AG04450 (cell line): ENCODE measurements at regions of chr9 and their contacts with region 1.

Region 1: GRCh38 chr9:120950421-120951388 is 24.1 kb upstream of the TRAF1 start:
- DNase-seq: no peak
- H3K4me3 ChIP-seq: no peak overlapping the region
- H3K27ac ChIP-seq: no peak overlapping the region
- H3K27me3 ChIP-seq: peaks cover 3% of the 10 kb centered on the region
- CTCF ChIP-seq: no peak

Region 2: GRCh38 chr9:120610975-120611689 is 339.6 kb before region 1 on chr9:
- CTCF ChIA-PET with region 1: interaction called, 12 read pairs
- POLR2A ChIA-PET with region 1: no interaction called
- DNase-seq: no peak
- H3K4me3 ChIP-seq: no peak overlapping the region
- H3K27ac ChIP-seq: no peak overlapping the region
- H3K27me3 ChIP-seq: no peaks in the 10 kb centered on the region
- CTCF ChIP-seq: peak; percentile 13; the same call in 1 of the 2 replicates